ENCODE measurements at regions of chr13 and their contacts with region 1.

Region 1: GRCh38 chr13:22903301-22903700 is 277.5 kb upstream of the SGCG start:
- ATAC-seq: peak in 2 of 8 experiments; percentile 34 to 63
- H3K4me3 ChIP-seq: no peak overlapping the region
- H3K27ac ChIP-seq: no peak overlapping the region
- H3K4me1 ChIP-seq: no peaks in the 10 kb centered on the region

Region 2: DNA sequence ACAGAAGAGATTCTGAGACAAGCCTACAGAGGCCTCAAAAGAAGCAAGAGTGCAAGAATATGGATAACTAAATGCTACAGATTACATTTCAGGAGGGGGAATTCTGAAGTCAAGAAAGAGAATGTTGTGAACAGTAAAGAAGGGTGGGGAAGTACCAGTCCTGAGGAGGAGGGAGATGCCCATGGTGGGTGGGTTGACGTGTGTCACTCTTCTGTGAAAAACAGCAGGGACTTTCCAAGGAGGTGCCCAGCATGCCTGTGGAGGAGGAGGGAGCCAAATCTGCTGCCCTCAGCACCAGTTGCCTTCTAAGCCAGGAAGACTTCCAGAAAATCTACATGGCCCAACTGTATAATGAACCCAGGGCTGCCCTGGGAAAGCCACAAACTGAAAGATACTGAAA is 365.1 kb after region 1 on chr13:
- in situ Hi-C with region 1: no loop called
- ATAC-seq: no peak
- H3K4me3 ChIP-seq: no peak overlapping the region
- H3K27ac ChIP-seq: no peak overlapping the region
- H3K4me1 ChIP-seq: no peaks in the 10 kb centered on the region

Region 3: DNA sequence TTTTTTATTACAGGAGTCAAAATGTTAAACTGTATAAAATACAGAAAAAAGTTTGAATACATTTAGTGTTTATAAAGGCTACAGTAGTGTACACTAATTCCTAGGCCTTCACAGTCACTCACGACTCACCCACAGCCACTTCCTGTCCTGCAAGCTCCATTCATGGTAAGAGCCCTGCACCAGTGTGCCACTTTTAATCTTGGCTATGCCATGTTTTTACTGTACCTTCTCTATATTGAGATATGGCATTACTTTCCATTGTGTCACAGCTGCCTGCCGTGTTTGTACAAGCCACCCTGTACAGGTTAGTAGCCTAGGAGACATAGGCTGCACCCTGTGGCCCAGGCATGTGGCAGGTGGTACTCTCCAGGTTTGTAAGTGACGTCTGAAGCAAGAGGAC is 1438.1 kb after region 1 on chr13:
- in situ Hi-C with region 1: loop called in 2 of 9 experiments (anchors 25 kb)
- ATAC-seq: no peak
- H3K4me3 ChIP-seq: no peak overlapping the region
- H3K27ac ChIP-seq: no peak overlapping the region
- H3K4me1 ChIP-seq: no peaks in the 10 kb centered on the region